ENCODE measurements at regions of chr22 and their contacts with region 1.

Region 1: DNA sequence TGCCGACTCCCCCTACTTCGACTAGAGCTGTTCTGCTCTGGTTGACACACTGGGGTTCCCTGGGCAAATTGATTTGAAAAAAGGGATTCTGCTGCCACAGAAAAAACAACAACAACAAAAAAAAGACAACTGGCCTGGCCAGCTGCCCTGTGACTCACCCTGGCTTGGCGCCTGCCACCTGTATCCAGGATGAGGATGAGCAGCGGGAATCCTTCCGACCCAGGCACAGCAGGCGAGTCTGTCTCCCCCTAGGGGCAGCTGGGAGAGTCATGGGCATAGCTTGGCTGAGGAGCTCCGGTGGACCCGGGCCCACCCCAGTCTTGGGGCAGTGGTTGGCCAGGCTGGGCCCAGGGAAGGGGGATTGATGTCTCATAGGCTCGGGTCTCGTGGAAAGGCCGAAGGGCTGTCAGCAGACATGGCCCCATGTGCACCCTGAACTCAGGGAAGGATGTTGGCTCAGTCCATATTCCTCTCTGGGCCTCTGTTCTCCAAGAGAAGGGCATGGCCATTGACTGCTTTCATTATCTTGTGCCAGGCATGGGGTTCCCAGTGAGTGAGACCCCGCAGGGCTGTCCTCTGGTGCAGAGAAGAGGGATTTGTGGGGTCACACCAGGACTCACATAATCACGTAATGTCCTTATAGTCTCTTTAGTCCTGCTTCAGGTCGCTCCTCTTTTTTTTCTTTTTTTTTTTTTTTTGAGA is 10.4 kb upstream of the SUN2 start:
- DNase-seq: peak; percentile 50
- ATAC-seq: peak; percentile 45
- H3K4me3 Mint-ChIP-seq: no peak overlapping the region
- H3K27ac Mint-ChIP-seq: no peak overlapping the region
- H3K4me1 Mint-ChIP-seq: no peaks in the 10 kb centered on the region
- H3K27me3 Mint-ChIP-seq: no peaks in the 10 kb centered on the region
- CTCF ChIP-seq: peak; percentile 84

Region 2: GRCh38 chr22:38755911-38756532 is 10.2 kb before region 1 on chr22 and contains the start of gene SUN2:
- CTCF ChIA-PET with region 1: interaction called, 63 read pairs
- POLR2A ChIA-PET with region 1: interaction called, 5 read pairs
- intact Hi-C with region 1: no loop called
- DNase-seq: peak; percentile 95
- ATAC-seq: peak; percentile 73
- H3K4me3 Mint-ChIP-seq: peak within 1 kb of the TSS; percentile 87
- H3K27ac Mint-ChIP-seq: peak within 1 kb of the TSS; percentile 99
- H3K4me1 Mint-ChIP-seq: peaks cover 54% of the 10 kb centered on the region
- H3K27me3 Mint-ChIP-seq: no peaks in the 10 kb centered on the region
- CTCF ChIP-seq: no peak
- total RNA-seq, gene SUN2: 101 to 107 TPM

Region 3: GRCh38 chr22:38777087-38777671 is 11.0 kb after region 1 on chr22:
- CTCF ChIA-PET with region 1: interaction called, 13 read pairs
- POLR2A ChIA-PET with region 1: interaction called, 3 read pairs
- intact Hi-C with region 1: no loop called
- DNase-seq: no peak
- ATAC-seq: no peak
- H3K4me3 Mint-ChIP-seq: no peak overlapping the region
- H3K27ac Mint-ChIP-seq: no peak overlapping the region
- H3K4me1 Mint-ChIP-seq: no peaks in the 10 kb centered on the region
- H3K27me3 Mint-ChIP-seq: no peaks in the 10 kb centered on the region
- CTCF ChIP-seq: no peak

Region 4: DNA sequence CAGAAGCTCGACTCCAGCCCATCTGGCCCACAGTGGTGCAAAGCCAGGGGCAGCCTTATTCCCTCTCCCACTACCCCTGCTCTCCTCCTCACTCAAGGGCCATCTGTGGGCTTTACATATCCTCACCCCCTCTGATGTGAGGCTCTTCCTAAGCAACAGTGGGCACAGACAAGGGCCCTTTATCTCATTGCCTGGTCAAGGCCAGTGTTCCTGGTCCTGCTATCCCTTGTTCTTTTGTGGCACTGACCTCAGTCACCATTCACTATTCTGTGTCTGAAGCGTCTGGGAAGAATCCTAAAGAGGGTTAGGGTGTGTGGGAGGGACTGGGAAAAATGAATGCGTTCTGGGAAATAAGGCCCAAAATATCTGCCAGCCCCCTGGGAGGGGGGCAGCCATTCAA is 20.4 kb after region 1 on chr22:
- CTCF ChIA-PET with region 1: interaction called, 14 read pairs
- POLR2A ChIA-PET with region 1: interaction called, 3 read pairs
- intact Hi-C with region 1: no loop called
- DNase-seq: no peak
- ATAC-seq: no peak
- H3K4me3 Mint-ChIP-seq: no peak overlapping the region
- H3K27ac Mint-ChIP-seq: no peak overlapping the region
- H3K4me1 Mint-ChIP-seq: peaks cover 3% of the 10 kb centered on the region
- H3K27me3 Mint-ChIP-seq: no peaks in the 10 kb centered on the region
- CTCF ChIP-seq: no peak

Region 5: DNA sequence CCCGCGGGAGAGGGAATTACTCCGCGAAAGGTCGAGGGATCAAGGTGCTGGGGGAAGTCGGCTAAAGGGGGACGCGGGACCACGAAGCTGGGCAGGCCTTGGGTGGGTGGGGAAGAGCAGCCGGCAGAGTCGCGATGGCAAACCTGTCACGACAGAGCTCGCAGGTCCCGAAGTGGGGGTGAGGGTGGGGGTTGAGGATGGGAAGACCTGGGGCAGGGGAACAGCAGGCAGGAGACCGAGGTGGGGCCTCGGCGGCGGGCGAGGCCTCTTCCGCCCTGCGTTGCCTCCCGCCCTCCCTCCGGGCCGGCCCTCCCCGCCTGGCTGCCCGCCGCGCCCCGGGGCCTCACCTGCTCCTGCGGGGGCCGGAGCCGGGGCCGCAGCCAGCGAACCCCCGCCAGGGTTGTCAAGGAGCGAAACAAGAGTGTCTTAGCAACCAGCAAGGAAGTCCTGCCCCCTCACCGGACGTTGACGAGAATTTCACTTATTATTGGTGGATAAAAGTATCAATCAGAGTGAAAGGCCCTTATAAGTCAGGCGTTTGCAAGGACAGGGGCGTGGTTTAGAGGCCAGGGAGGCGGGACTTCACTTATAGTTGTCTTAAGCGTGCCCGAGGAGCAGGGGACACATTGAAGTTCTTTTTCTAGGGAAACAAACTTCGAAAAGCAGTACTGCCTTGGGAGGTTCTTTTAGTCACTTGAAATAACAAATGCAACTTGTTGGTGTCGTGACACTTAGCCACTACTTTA is 27.7 kb after region 1 on chr22 and contains the start of gene DNAL4:
- CTCF ChIA-PET with region 1: interaction called, 14 read pairs
- POLR2A ChIA-PET with region 1: no interaction called
- intact Hi-C with region 1: no loop called
- DNase-seq: peak; percentile 97
- ATAC-seq: peak; percentile 97
- H3K4me3 Mint-ChIP-seq: peak within 1 kb of the TSS; percentile 85
- H3K27ac Mint-ChIP-seq: peak within 1 kb of the TSS; percentile 82
- H3K4me1 Mint-ChIP-seq: peaks cover 23% of the 10 kb centered on the region
- H3K27me3 Mint-ChIP-seq: peaks cover 3% of the 10 kb centered on the region
- CTCF ChIP-seq: no peak
- total RNA-seq, gene DNAL4: 5.5 to 6.0 TPM

Region 6: GRCh38 chr22:38843201-38843715 is 77.0 kb after region 1 on chr22:
- CTCF ChIA-PET with region 1: interaction called, 18 read pairs
- POLR2A ChIA-PET with region 1: no interaction called
- intact Hi-C with region 1: no loop called
- DNase-seq: peak; percentile 63
- ATAC-seq: peak; percentile 86
- H3K4me3 Mint-ChIP-seq: peak overlapping the region; percentile 18
- H3K27ac Mint-ChIP-seq: no peak overlapping the region
- H3K4me1 Mint-ChIP-seq: peaks cover 10% of the 10 kb centered on the region
- H3K27me3 Mint-ChIP-seq: peaks cover 21% of the 10 kb centered on the region
- CTCF ChIP-seq: peak; percentile 38

Region 7: DNA sequence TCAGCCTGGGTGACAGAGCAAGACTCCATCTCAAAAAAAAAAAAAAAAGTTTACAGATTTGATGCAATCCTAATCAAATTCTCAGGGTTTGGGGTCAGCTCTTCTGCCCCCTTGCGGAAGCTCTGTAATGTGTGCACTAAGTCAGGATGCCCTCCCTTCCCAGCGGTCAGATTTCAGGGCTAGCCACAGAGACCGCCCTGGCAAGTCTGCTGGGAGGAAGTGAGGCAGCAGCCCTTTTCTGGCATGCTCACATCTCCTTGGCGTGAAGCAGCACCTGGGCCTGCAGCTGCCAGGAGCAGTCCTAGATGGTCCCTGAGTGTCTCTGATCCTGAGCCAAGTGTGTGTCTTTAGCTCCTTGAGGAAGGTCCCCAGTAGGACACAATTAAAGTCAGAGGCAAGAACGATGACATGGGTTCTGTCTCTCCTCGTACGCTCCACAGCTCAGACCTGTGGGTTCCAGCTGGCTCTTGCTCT is 237.0 kb after region 1 on chr22:
- CTCF ChIA-PET with region 1: interaction called, 13 read pairs
- POLR2A ChIA-PET with region 1: no interaction called
- intact Hi-C with region 1: no loop called
- DNase-seq: peak; percentile 90
- ATAC-seq: peak; percentile 95
- H3K4me3 Mint-ChIP-seq: no peak overlapping the region
- H3K27ac Mint-ChIP-seq: no peak overlapping the region
- H3K4me1 Mint-ChIP-seq: peaks cover 5% of the 10 kb centered on the region
- H3K27me3 Mint-ChIP-seq: peaks cover 1% of the 10 kb centered on the region
- CTCF ChIP-seq: peak; percentile 71